Heart left ventricle (tissue), 16 donors: ENCODE measurements at regions of chr17 and their contacts with region 1.

Region 1: GRCh38 chr17:45317112-45317928 is 500 bp upstream of the MAP3K14 start:
- DNase-seq: peak; percentile 100
- ATAC-seq: peak; percentile 90 to 96 (median 94)
- H3K4me3 ChIP-seq: peak overlapping the region in 11 of 12 donors; percentile 24 to 93 (median 80)
- H3K27ac ChIP-seq: peak overlapping the region; percentile 73 to 98 (median 94)
- H3K4me1 ChIP-seq: peaks cover 0 to 75% (median 46%) of the 10 kb centered on the region in 12 donors
- H3K27me3 ChIP-seq: no peaks in the 10 kb centered on the region
- CTCF ChIP-seq: peak in 1 of 12 donors; percentile 19
- POLR2A ChIP-seq: no peak

Region 2: GRCh38 chr17:45277216-45277849 is 40.0 kb before region 1 on chr17:
- intact Hi-C with region 1: loop called in 9 of 10 experiments (anchors 2 to 5 kb)
- DNase-seq: peak; percentile 90 to 97 (median 93)
- ATAC-seq: peak; percentile 62 to 76 (median 67)
- H3K4me3 ChIP-seq: peak overlapping the region in 1 of 12 donors; percentile 33
- H3K27ac ChIP-seq: peak overlapping the region; percentile 28 to 89 (median 78)
- H3K4me1 ChIP-seq: peaks cover 0 to 43% (median 26%) of the 10 kb centered on the region in 12 donors
- H3K27me3 ChIP-seq: no peaks in the 10 kb centered on the region
- CTCF ChIP-seq: peak; percentile 72 to 87 (median 82)
- POLR2A ChIP-seq: peak in 1 of 2 donors; percentile 25

Region 3: DNA sequence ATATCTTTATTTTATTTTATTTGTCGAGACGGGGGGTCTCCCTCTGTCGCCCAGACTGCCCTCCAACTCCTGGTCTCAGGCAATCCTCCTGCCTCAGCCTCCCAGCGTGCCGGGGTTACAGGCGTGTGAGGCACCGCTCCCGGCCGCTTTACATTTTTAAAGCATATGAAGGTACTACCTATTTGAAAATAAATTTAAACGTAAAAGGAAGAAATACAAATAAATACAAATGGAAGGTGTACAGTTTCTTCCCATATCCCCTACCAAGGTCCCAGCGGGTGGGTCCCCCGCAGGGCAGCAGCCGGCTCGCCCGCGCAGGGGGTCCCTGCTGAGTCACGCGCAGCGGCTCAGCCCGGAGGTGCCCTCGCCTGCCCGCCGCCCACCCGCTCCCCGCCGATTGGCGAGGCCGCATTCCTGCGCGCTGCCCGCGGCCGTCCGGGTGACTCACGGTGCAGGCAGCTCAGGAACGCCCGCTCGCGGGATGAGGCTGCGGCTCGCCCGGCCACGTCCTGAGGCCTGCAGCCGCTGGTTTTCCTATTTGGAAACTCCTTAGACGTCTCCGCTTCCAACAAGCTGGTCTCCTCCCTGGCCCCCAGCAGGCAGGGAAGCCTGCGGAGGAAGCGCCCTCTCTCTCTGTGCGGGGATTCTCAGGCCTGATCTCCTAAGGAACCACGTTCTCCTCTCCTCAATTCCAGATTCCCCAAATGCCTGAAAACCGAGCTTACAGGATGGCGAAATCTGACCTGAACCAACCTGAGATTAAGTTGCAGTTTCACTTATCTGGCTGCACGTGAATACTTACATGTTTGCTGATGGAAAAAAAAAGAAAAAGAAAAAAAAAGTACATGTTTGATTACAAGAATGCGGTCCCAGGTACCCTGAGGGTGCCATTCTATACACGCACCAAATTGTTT is 54.4 kb after region 1 on chr17:
- intact Hi-C with region 1: loop called in 9 of 10 experiments (anchors 1 to 5 kb)
- DNase-seq: peak; percentile 81 to 91 (median 90)
- ATAC-seq: peak; percentile 84 to 97 (median 96)
- H3K4me3 ChIP-seq: peak overlapping the region in 10 of 12 donors; percentile 11 to 46 (median 34)
- H3K27ac ChIP-seq: peak overlapping the region; percentile 28 to 92 (median 80)
- H3K4me1 ChIP-seq: peaks cover 0 to 33% (median 21%) of the 10 kb centered on the region in 12 donors
- H3K27me3 ChIP-seq: no peaks in the 10 kb centered on the region
- CTCF ChIP-seq: peak in 2 of 12 donors; percentile 3 to 10
- POLR2A ChIP-seq: peak in 1 of 2 donors; percentile 56

Region 4: DNA sequence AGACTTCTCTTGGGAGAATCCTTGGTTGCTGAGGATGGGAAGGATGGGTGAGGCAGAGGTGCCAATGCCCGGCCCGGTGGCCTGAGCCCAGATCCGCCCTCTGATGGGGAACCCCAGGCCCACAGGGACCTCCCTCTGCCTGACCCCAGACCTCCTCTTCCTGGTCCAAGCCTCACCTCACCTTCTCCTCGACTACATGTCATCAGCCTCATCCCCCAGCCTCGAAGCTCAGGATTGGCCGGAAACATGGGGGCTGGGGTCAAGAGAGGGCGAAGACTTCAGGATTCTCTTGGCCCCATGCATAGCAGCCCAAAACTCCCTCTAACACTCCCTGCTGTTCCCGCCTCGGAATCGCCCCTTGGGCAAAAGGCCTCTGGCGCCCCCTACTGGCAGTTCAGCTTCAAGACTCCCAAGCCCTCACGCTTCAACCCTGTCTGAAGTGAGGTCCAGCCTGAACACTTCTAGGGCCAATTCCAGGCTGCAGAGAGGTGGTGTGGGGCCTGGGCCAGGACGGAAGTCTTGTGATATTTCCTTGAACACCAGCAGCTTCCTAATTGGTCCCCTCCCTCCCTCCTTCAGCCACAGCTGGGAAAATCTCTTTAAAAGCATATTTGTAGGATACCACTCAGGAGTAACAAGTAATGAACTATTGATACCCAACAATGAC is 68.1 kb after region 1 on chr17:
- intact Hi-C with region 1: loop called in 2 of 10 experiments (anchors 5 kb)
- DNase-seq: peak; percentile 88 to 94 (median 89)
- ATAC-seq: peak; percentile 86 to 95 (median 90)
- H3K4me3 ChIP-seq: no peak overlapping the region
- H3K27ac ChIP-seq: peak overlapping the region in 1 of 12 donors; percentile 63
- H3K4me1 ChIP-seq: peaks cover 0 to 31% (median 14%) of the 10 kb centered on the region in 12 donors
- H3K27me3 ChIP-seq: peaks cover 0 to 3% (median 0%) of the 10 kb centered on the region in 9 donors
- CTCF ChIP-seq: peak; percentile 91 to 100 (median 98)
- POLR2A ChIP-seq: no peak